GM23248 (cell line): ENCODE measurements at regions of chr22 and their contacts with region 1.

Region 1: DNA sequence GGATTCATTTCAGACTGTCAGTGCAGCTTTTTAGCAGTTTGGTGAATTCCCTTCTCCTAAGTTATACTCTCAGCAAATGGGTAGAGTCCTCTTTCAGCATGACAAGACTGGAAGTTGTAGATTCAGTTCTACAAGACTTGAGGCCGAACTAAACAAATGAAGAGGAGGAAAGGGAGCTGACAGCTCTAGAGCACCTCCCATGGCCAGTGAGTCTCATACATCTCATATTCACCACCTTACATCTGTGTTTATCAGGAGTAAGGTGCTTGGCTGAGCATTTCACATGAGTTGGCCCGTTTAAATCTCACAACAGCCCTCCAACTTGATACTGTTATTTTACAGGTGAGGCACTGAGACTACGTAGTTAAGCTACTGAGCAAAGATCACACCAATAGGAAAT is 30.4 kb downstream of the SEZ6L start:
- DNase-seq: no peak
- H3K4me3 ChIP-seq: no peak overlapping the region
- H3K27ac ChIP-seq: no peak overlapping the region
- H3K4me1 ChIP-seq: no peaks in the 10 kb centered on the region
- H3K27me3 ChIP-seq: no peaks in the 10 kb centered on the region

Region 2: GRCh38 chr22:26054841-26055605 is 144.6 kb before region 1 on chr22:
- in situ Hi-C with region 1: no loop called
- DNase-seq: no peak
- H3K4me3 ChIP-seq: no peak overlapping the region
- H3K27ac ChIP-seq: no peak overlapping the region
- H3K4me1 ChIP-seq: no peaks in the 10 kb centered on the region
- H3K27me3 ChIP-seq: no peaks in the 10 kb centered on the region

Region 3: DNA sequence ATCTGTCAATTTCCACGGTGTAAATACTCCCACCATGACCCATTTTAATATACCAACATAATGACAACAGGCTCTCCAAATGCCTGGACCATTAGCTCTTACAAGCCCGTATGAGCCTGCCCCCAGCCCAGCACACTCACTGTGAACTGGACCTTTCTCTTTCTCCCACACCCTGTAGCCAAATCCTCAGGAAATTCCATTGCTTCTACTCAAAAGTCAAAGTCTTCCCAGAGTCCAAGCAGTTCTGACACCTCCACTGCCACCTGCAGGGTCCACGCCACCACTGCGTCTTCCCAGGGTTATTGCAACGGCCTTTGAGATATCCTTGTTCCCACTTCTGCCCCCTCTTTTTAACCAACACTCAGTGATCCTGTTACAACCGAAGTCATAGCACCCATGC is 119.3 kb after region 1 on chr22:
- in situ Hi-C with region 1: loop called (anchors 25 kb)
- DNase-seq: peak; percentile 88
- H3K4me3 ChIP-seq: no peak overlapping the region
- H3K27ac ChIP-seq: peak overlapping the region; percentile 48
- H3K4me1 ChIP-seq: peaks cover 38% of the 10 kb centered on the region
- H3K27me3 ChIP-seq: no peaks in the 10 kb centered on the region; the same call in 1 of the 2 replicates

Region 4: DNA sequence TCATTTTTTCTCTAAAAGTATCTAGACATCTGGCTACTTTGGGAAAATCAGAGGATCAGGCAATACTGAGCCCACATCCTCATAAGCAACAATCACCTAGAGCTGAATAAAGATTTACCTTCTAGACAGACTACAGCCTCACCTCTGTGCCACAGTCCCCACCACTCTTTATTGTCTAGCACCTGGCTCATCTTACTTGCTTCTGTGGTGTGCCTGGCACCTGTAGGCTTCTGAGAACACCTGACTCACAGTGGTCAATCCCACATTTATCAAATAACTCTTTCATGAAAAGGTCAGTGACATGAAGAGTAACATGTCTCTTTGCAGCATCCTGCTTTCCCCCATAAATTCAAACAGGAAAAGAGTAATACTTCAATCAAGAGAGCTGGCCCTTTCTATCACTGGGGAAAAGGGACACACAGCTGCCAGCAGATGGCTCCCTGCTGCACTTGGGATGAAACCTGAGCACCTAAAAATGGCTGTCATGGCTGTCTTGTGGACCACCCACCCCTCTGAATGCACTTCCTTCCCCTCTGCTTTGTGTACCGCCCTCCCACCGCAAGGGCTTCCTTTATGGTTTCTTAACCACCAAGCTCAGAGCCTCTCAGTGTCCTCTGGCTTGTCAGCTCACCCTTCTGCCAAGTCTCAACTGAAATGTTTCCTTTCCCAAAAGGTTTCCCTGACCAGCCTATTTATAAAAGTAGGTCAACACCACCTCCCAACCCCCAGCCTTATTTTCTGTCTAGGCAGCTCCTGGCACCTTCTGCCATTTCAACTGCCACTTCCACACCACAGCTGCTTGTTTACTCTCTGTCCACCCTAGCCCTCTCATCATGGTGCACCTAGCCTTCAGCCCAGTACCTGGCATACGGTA is 303.3 kb after region 1 on chr22:
- in situ Hi-C with region 1: no loop called
- DNase-seq: peak; percentile 47
- H3K4me3 ChIP-seq: no peak overlapping the region
- H3K27ac ChIP-seq: no peak overlapping the region
- H3K4me1 ChIP-seq: peaks cover 7% of the 10 kb centered on the region
- H3K27me3 ChIP-seq: no peaks in the 10 kb centered on the region